Activated T-helper 2 cell treated with anti-CD3 and anti-CD28 coated beads, Interferon-gamma antibody, Interleukin-2, Interleukin-4, amounts not matched to agents 10 μg/mL and 5 μg/mL and 100 μg/mL, durations not matched to agents 14 hours and 24 hours and 36 hours (primary cell): ENCODE measurements at regions of chr1 and their contacts with region 1.

Region 1: GRCh38 chr1:58573705-58574591 is 3.1 kb downstream of the TACSTD2 start:
- DNase-seq: peak; percentile 42
- H3K4me3 Mint-ChIP-seq: no peak overlapping the region
- H3K27ac Mint-ChIP-seq: no peak overlapping the region
- H3K4me1 Mint-ChIP-seq: peaks cover 32% of the 10 kb centered on the region
- H3K27me3 Mint-ChIP-seq: peaks cover 75% of the 10 kb centered on the region

Region 2: DNA sequence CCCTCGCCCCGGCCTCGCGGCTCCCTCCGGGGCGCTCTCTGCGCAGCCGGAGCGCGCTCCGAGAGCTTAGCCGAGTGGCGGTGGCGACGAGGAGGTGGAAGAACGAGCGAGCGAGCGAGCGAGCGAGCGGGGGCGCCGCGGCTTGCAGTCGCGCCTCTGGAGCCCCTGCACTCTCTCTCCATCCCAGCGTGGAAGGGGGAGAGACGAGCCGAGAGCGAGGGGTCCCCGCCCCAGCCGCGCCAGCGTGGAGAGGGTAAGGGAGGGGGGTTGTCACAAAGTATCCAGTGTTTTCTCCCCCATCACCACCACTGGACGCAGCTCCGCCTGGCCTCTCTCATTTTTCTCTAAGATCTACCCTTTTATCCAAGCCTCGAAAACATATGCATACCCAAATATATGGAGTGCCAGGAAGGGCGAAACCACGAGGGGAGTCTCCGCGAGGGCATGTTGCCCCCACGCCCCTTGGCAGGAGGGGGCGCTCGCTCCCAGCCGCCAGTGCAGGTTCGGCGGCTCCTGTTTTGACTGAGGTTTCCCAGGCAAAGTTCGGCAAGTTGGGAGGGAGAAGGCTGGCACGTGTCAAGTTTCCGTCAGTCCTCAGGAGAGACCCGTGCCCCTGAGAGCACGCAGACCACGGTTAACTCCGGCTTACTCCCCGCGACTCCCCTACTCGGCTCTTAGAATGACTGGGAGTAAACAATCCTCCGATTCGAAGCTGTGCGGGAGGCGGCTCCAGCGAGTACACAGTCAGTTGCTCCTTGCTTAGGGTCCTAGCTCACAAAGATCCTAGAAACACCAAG is 1149.5 kb before region 1 on chr1:
- intact Hi-C with region 1: loop called (anchors 10 kb)
- DNase-seq: no peak
- H3K4me3 Mint-ChIP-seq: no peak overlapping the region
- H3K27ac Mint-ChIP-seq: no peak overlapping the region
- H3K4me1 Mint-ChIP-seq: no peaks in the 10 kb centered on the region
- H3K27me3 Mint-ChIP-seq: peaks cover 57% of the 10 kb centered on the region

Region 3: DNA sequence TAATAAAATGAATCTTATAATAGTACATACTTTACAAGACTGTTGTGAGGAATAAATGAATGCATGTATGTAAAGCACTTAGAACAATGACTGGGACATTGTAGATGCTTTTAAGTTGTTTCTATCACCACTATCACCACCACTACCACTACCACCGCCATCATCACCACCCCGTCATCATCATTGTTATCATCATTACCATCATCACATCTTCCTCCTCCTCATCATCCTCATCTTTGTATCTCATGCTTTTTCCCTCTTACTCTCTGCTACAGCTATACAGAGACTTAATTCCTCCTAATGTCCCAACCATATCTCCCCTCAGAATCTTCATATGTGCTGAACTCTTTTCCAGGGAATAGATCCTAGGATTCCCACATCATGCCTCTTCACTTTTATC is 292.2 kb before region 1 on chr1:
- intact Hi-C with region 1: no loop called
- DNase-seq: no peak
- H3K4me3 Mint-ChIP-seq: no peak overlapping the region
- H3K27ac Mint-ChIP-seq: no peak overlapping the region
- H3K4me1 Mint-ChIP-seq: no peaks in the 10 kb centered on the region
- H3K27me3 Mint-ChIP-seq: no peaks in the 10 kb centered on the region